Transverse colon (tissue), 4 donors: ENCODE measurements at regions of chr15 and their contacts with region 1.

Region 1: GRCh38 chr15:47897525-47897924 is 180.2 kb downstream of the SEMA6D start:
- DNase-seq: no peak
- H3K4me3 ChIP-seq: no peak overlapping the region
- H3K27ac ChIP-seq: no peak overlapping the region
- H3K4me1 ChIP-seq: no peaks in the 10 kb centered on the region
- H3K27me3 ChIP-seq: no peaks in the 10 kb centered on the region
- CTCF ChIP-seq: no peak
- EP300 ChIP-seq: no peak
- POLR2A ChIP-seq: no peak

Region 2: GRCh38 chr15:47551079-47551478 is 346.4 kb before region 1 on chr15:
- in situ Hi-C with region 1: no loop called
- intact Hi-C with region 1: no loop called
- DNase-seq: no peak
- H3K4me3 ChIP-seq: no peak overlapping the region
- H3K27ac ChIP-seq: no peak overlapping the region
- H3K4me1 ChIP-seq: peaks cover 0 to 16% (median 2%) of the 10 kb centered on the region in 4 donors
- H3K27me3 ChIP-seq: no peaks in the 10 kb centered on the region
- CTCF ChIP-seq: no peak
- EP300 ChIP-seq: no peak
- POLR2A ChIP-seq: no peak

Region 3: DNA sequence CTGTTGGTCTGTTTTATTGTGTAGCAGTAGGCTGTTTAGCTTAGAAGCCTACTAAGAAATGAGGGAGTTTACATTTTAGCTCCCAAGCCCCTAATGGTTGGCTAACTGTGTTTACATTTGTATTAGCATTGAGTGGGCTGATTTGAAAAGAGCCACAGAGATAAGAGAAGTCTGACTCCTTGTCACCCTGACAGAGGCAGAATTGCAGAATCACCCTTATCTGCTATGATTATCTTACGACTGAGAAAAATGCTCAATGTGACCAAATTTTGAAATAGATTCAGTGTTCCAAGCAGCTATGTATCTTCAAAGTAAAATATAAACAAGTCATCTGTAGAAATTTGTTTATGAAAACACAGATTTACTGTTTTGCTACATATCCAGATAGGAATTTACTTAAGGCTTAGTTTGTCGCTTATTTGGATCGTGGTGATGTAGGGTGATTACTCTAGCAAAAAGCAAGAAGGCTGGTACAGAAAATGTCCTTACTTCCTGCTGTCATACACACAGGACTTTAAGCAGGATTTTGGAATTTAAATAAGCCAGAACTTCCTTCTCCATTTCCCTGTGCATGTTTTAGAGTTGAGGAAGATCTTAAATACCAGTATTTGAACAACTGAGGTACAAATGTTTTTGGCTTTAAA is 161.3 kb before region 1 on chr15:
- in situ Hi-C with region 1: no loop called
- intact Hi-C with region 1: no loop called
- DNase-seq: no peak
- H3K4me3 ChIP-seq: no peak overlapping the region
- H3K27ac ChIP-seq: peak overlapping the region in 2 of 4 donors; percentile 8 to 12
- H3K4me1 ChIP-seq: peaks cover 9 to 41% (median 20%) of the 10 kb centered on the region in 4 donors
- H3K27me3 ChIP-seq: no peaks in the 10 kb centered on the region
- CTCF ChIP-seq: no peak
- EP300 ChIP-seq: no peak
- POLR2A ChIP-seq: no peak

Region 4: DNA sequence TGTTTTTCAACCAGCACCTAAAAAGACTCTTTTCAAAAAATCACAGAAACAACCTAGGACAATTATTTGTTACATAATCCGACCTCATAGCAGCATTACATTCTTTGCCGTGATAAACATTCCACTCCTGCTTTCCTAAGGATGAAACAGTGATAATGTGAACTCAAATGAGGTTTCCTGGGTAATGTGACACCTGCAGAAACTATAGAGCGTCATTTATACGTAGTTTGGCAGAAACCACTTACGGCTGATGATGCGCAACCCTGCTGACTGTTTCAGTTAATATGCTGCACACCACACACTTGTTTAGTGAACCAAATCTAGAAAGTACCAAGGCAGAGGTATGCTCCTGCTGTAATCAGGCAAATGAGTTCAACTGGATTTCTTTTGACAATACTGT is 124.4 kb before region 1 on chr15:
- in situ Hi-C with region 1: no loop called
- intact Hi-C with region 1: no loop called
- DNase-seq: no peak
- H3K4me3 ChIP-seq: no peak overlapping the region
- H3K27ac ChIP-seq: no peak overlapping the region
- H3K4me1 ChIP-seq: no peaks in the 10 kb centered on the region
- H3K27me3 ChIP-seq: no peaks in the 10 kb centered on the region
- CTCF ChIP-seq: no peak
- EP300 ChIP-seq: no peak
- POLR2A ChIP-seq: no peak

Region 5: GRCh38 chr15:47870956-47871625 is 26.4 kb before region 1 on chr15:
- in situ Hi-C with region 1: no loop called
- intact Hi-C with region 1: loop called (anchors 1 kb)
- DNase-seq: no peak
- H3K4me3 ChIP-seq: no peak overlapping the region
- H3K27ac ChIP-seq: no peak overlapping the region
- H3K4me1 ChIP-seq: no peaks in the 10 kb centered on the region
- H3K27me3 ChIP-seq: no peaks in the 10 kb centered on the region
- CTCF ChIP-seq: no peak
- EP300 ChIP-seq: no peak
- POLR2A ChIP-seq: no peak